ENCODE measurements at regions of chr12 and their contacts with region 1.

Region 1: GRCh38 chr12:47779301-47779942 is 6.4 kb downstream of the SLC48A1 start:
- DNase-seq: peak; percentile 99
- H3K4me3 ChIP-seq: no peak overlapping the region
- H3K27ac ChIP-seq: peak overlapping the region; percentile 51 to 80 (median 61)
- H3K4me1 ChIP-seq: peaks cover 53 to 80% (median 73%) of the 10 kb centered on the region in 4 donors
- H3K27me3 ChIP-seq: no peaks in the 10 kb centered on the region
- CTCF ChIP-seq: peak; percentile 94 to 96 (median 96)
- EP300 ChIP-seq: no peak
- POLR2A ChIP-seq: no peak

Region 2: GRCh38 chr12:47725893-47726292 is 53.5 kb before region 1 on chr12:
- intact Hi-C with region 1: no loop called
- DNase-seq: no peak
- H3K4me3 ChIP-seq: no peak overlapping the region
- H3K27ac ChIP-seq: no peak overlapping the region
- H3K4me1 ChIP-seq: peaks cover 14 to 24% (median 16%) of the 10 kb centered on the region in 4 donors
- H3K27me3 ChIP-seq: no peaks in the 10 kb centered on the region
- CTCF ChIP-seq: no peak
- EP300 ChIP-seq: no peak
- POLR2A ChIP-seq: no peak

Region 3: DNA sequence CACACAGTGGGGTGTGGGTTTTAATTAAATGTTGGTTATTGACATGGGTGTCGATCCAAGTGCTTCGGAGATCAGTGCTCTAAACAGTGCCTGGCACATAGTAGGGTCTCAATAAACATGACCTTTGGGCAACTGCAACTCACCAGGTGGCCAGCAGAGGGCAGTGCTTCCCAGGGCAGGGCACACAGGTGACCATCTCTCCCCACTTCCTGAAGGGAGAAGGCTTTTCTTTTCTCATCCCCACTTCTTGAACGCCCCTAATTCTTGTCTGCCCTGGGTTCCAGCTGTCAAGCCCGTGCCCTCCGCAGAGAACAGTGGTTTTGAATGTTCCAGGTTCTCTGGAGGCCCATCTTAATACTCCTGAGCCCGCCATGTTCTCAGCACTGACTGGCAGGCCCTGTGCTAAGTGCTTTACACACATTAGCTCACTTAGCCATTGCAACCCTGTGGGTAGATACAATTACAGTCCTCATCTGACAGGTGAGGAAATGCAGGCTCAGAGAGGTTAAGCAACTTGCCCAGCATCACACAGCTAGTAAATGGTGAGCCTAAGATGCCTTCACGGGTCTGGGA is 37.1 kb before region 1 on chr12:
- intact Hi-C with region 1: loop called (anchors 5 kb)
- DNase-seq: no peak
- H3K4me3 ChIP-seq: no peak overlapping the region
- H3K27ac ChIP-seq: no peak overlapping the region
- H3K4me1 ChIP-seq: peaks cover 39 to 48% (median 46%) of the 10 kb centered on the region in 4 donors
- H3K27me3 ChIP-seq: no peaks in the 10 kb centered on the region
- CTCF ChIP-seq: peak; percentile 94 to 100 (median 98)
- EP300 ChIP-seq: no peak
- POLR2A ChIP-seq: no peak

Region 4: GRCh38 chr12:47837190-47838171 is 58.1 kb after region 1 on chr12:
- intact Hi-C with region 1: loop called (anchors 1 kb)
- DNase-seq: no peak
- H3K4me3 ChIP-seq: no peak overlapping the region
- H3K27ac ChIP-seq: peak overlapping the region in 1 of 4 donors; percentile 55
- H3K4me1 ChIP-seq: peaks cover 12 to 28% (median 21%) of the 10 kb centered on the region in 4 donors
- H3K27me3 ChIP-seq: no peaks in the 10 kb centered on the region
- CTCF ChIP-seq: peak; percentile 91 to 97 (median 96)
- EP300 ChIP-seq: no peak
- POLR2A ChIP-seq: no peak

Measured in esophagus muscularis mucosa (tissue), 4 donors.